Activated T-helper 1 cell treated with anti-CD3 and anti-CD28 coated beads, Interleukin-12 subunit alpha, Interleukin-12 subunit beta, Interleukin-2, Interleukin-4 antibody, amounts not matched to agents 30 ng/mL and 10 ng/mL and 1 ng/mL, durations not matched to agents 14 hours and 24 hours and 36 hours (primary cell): ENCODE measurements at regions of chr1 and their contacts with region 1.

Region 1: DNA sequence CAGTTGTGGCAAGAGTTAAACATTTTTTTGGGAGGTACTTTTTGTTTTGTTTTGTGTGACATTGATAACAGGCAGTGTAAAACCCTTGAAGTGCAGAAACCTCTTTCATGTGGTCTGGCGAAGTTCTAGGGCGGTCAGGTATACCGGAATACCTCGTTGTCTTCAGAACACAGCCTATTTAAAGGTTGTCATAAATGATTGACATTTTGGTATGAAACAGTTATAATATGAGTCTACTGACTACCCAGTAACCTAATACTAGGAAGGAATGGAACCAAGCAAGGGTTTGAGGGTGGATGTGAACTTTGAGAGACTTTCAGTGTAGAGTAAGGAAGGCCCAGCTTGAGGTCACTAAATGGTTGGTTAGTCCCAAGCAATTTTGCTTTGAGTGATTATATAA is 40.5 kb downstream of the PATJ start:
- DNase-seq: peak; percentile 70
- H3K4me3 Mint-ChIP-seq: no peak overlapping the region
- H3K27ac Mint-ChIP-seq: peak overlapping the region; percentile 78
- H3K4me1 Mint-ChIP-seq: peaks cover 57% of the 10 kb centered on the region
- H3K27me3 Mint-ChIP-seq: no peaks in the 10 kb centered on the region

Region 2: DNA sequence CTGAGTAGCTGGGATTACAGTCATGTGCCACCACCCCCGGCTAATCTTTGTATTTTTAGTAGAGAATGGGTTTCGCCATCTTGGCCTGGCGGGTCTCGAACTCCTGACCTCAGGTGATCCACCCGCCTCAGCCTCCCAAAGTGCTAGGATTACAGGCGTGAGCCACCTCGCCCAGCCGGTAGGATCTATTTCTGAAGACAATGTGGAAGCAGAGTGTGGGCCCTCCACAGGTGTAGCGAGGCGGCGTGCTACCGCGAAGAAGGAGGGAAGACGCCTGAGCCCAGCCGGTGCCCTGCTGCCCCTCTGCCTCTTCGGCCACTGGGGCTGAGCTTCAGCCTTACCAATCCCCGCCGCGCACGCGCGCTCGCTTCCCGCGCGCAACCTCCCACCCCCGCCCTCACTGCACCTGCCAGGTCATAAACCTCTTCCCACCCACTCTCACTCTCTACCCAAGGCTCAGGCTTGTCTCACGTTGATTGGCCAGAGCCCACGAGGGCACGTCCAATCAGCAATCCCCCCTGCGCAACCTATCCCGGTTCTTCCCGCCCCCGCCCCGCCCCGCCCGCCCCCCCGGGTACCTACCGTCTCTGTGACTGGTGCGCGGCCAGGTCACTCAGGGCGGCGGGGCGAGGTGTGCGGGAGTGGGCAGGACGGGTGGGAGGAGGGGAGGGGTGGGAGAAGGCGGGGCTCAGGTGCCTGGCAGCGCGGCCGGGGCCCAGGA is 1968.4 kb before region 1 on chr1:
- intact Hi-C with region 1: loop called (anchors 5 kb)
- DNase-seq: peak; percentile 76
- H3K4me3 Mint-ChIP-seq: peak overlapping the region; percentile 81
- H3K27ac Mint-ChIP-seq: peak overlapping the region; percentile 43
- H3K4me1 Mint-ChIP-seq: peaks cover 4% of the 10 kb centered on the region
- H3K27me3 Mint-ChIP-seq: peaks cover 24% of the 10 kb centered on the region

Region 3: GRCh38 chr1:61301824-61302657 is 480.7 kb before region 1 on chr1:
- intact Hi-C with region 1: loop called (anchors 5 kb)
- DNase-seq: peak; percentile 16
- H3K4me3 Mint-ChIP-seq: peak overlapping the region; percentile 3
- H3K27ac Mint-ChIP-seq: peak overlapping the region; percentile 84
- H3K4me1 Mint-ChIP-seq: peaks cover 34% of the 10 kb centered on the region
- H3K27me3 Mint-ChIP-seq: peaks cover 2% of the 10 kb centered on the region

Region 4: GRCh38 chr1:61741711-61742619 is 40.8 kb before region 1 on chr1 and contains the start of gene PATJ:
- intact Hi-C with region 1: loop called (anchors 2 kb)
- DNase-seq: peak; percentile 59
- H3K4me3 Mint-ChIP-seq: peak within 1 kb of the TSS; percentile 92
- H3K27ac Mint-ChIP-seq: peak within 1 kb of the TSS; percentile 88
- H3K4me1 Mint-ChIP-seq: peaks cover 22% of the 10 kb centered on the region
- H3K27me3 Mint-ChIP-seq: no peaks in the 10 kb centered on the region
- total RNA-seq, gene PATJ: 5.1 and 7.3 TPM in 2 replicates

Region 5: GRCh38 chr1:61797045-61797755 is 14.4 kb after region 1 on chr1:
- intact Hi-C with region 1: loop called (anchors 2 kb)
- DNase-seq: no peak
- H3K4me3 Mint-ChIP-seq: no peak overlapping the region
- H3K27ac Mint-ChIP-seq: no peak overlapping the region
- H3K4me1 Mint-ChIP-seq: peaks cover 9% of the 10 kb centered on the region
- H3K27me3 Mint-ChIP-seq: no peaks in the 10 kb centered on the region